Dorsolateral prefrontal cortex (tissue), 120 donors: ENCODE measurements at regions of chrX and their contacts with region 1.

Region 1: DNA sequence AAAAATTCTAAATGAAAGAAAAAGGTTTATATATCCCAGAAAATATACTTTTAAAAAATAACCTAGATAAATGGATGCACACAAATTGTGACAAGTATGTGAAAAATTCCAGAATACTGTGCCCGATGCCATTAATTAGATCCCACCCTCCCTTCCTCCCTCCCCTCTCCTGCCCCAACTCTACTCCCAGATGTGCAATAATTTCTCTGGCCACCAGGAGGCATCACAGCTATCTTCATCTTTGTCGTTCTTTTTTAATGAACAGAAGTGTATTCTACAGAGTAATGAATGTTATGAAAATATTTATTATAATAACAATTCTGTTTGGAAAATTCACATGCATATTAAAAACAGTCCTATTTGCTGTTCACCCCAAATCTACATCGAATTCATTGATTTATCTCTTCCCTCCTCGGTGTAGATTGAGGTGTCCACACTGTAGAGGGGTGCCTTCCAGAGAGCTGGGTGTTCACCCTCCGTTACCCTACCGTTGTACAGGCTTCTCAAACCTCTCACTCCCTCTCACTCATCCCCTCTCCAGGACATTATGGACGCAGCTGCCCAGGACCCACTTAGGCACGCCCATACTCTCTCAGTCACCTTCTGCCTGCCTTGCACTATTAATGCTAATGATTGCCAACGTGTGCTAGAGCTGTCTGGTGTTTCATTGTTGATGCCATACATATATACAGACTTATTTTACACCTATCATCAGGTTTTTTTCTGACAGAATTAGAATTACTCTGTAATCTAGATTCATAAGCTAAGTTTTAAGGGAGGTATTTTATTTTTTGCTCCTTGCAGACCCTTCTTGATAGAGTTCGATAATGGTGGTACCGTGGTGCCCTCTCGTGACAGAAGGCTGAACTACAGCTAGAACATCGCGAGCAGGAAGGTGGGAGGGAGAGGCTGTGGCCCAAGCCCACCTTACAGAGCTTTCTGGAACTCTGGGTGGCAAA is 14.1 kb downstream of the RAB40AL start:
- DNase-seq: peak in 6 of 10 donors; percentile 27 to 70 (median 46)
- H3K4me3 ChIP-seq: peak overlapping the region in 51 of 59 donors; percentile 4 to 59 (median 34)
- H3K27ac ChIP-seq: no peak overlapping the region
- H3K27me3 ChIP-seq: peaks cover 0 to 43% (median 5%) of the 10 kb centered on the region in 45 donors
- CTCF ChIP-seq: peak; percentile 37 to 68 (median 58)

Region 2: GRCh38 chrX:103063918-103064434 is 112.8 kb after region 1 on chrX and contains the start of gene BEX1:
- intact Hi-C with region 1: loop called in 1 of 2 experiments (anchors 10 kb)
- DNase-seq: peak; percentile 84 to 95 (median 89)
- H3K4me3 ChIP-seq: peak within 1 kb of the TSS; percentile 15 to 75 (median 60)
- H3K27ac ChIP-seq: peak within 1 kb of the TSS in 57 of 59 donors; percentile 22 to 91 (median 77)
- H3K27me3 ChIP-seq: peaks cover 0 to 64% (median 16%) of the 10 kb centered on the region in 45 donors
- CTCF ChIP-seq: peak in 1 of 56 donors; percentile 13
- total RNA-seq, gene BEX1: 53.1 to 455 (median 280) TPM

Region 3: GRCh38 chrX:103157496-103158320 is 206.5 kb after region 1 on chrX:
- intact Hi-C with region 1: loop called (anchors 5 kb)
- DNase-seq: peak in 2 of 10 donors; percentile 5 to 9
- H3K4me3 ChIP-seq: no peak overlapping the region
- H3K27ac ChIP-seq: peak overlapping the region in 6 of 59 donors; percentile 4 to 66 (median 28)
- H3K27me3 ChIP-seq: peaks cover 0 to 38% (median 3%) of the 10 kb centered on the region in 45 donors
- CTCF ChIP-seq: peak in 55 of 56 donors; percentile 48 to 80 (median 66)

Region 4: DNA sequence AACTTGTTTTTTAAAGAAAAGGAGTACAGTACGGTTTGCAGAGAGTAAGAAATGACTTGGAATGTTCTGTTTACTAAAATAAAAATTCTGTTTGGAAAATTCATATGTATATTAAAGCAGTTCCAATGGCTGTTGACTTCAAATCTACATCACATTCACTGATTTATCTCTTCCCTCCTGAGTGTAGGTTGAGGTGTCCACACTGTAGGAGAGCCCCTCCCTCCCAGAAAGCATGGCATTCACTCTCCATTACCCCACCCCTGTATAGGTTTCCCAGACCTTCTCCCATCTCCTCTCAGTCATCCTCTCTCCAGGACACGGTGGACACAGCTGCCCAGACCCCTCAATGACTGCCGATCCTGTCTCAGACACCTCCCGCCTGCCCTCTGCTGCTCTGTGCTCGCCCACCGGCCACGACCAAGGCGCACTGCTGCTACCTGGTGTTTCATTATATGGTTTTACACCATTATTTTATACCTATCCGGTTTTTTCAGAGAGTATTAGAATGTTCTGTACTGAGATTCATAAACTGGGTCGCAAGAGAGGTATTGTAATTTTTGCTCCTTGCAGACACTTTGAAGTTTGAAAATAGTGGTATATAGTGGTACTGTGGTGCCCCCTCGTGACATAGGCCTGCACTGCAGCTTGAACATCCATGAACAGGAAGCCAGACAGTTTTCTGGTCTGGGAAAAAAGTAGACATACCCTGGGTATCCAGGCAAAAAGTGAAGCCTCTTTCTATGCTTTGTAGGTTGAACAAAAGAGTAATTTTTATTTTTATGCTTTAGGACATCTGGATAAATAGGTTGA is 225.0 kb after region 1 on chrX:
- intact Hi-C with region 1: loop called in 1 of 2 experiments (anchors 5 kb)
- DNase-seq: peak in 9 of 10 donors; percentile 39 to 79 (median 62)
- H3K4me3 ChIP-seq: peak overlapping the region in 47 of 59 donors; percentile 4 to 58 (median 36)
- H3K27ac ChIP-seq: no peak overlapping the region
- H3K27me3 ChIP-seq: peaks cover 0 to 90% (median 32%) of the 10 kb centered on the region in 45 donors
- CTCF ChIP-seq: peak; percentile 14 to 84 (median 74)